Activated CD4-positive, alpha-beta T cell treated with anti-CD3 and anti-CD28 coated beads for 36 hours (primary cell): ENCODE measurements at regions of chr11 and their contacts with region 1.

Region 1: DNA sequence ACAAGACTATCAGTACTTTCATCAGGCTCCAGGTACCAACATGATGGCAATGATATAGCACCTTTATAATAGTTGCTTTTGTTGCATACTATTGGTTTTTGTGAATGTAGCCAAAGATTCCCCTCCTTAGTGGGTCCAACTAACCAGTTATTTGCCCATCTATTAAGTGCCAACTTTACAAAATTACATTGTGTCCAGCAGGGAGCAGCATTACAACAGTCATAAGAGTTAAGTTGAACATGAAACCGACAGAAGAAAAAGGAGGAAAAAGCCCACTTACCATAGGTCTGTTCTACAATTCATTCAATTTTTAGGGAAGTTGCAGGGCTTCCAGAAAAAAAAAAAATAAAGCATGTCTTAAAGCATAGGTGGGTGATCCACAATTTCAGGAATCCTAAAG is 21.6 kb downstream of the IMMP1L start:
- DNase-seq: no peak
- ATAC-seq: no peak
- H3K4me3 Mint-ChIP-seq: no peak overlapping the region
- H3K27ac Mint-ChIP-seq: no peak overlapping the region
- H3K4me1 Mint-ChIP-seq: peaks cover 18% of the 10 kb centered on the region
- H3K27me3 Mint-ChIP-seq: no peaks in the 10 kb centered on the region

Region 2: GRCh38 chr11:30984442-30984816 is 503.4 kb before region 1 on chr11:
- CTCF ChIA-PET with region 1: no interaction called
- POLR2A ChIA-PET with region 1: no interaction called
- intact Hi-C with region 1: no loop called
- DNase-seq: no peak
- ATAC-seq: no peak
- H3K4me3 Mint-ChIP-seq: no peak overlapping the region
- H3K27ac Mint-ChIP-seq: no peak overlapping the region
- H3K4me1 Mint-ChIP-seq: no peaks in the 10 kb centered on the region
- H3K27me3 Mint-ChIP-seq: no peaks in the 10 kb centered on the region

Region 3: DNA sequence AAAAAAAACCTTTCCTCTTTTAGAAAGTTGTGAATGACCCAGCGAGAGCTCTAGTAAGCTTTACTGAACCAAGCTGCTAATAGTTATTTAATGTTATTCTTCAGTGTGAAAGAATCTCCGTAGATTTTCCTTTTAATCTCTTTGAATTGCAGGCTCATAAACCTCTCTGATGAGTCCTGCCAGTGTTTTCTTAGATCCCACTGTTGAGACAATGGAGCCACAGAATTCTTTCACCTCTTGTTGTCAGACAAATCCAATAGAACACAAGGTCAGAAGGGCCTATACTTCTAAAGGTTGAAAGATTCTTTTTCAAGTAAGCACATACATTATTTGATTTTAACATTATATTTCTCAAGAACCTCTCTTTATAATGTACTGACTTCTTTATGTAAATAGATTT is 66.0 kb before region 1 on chr11:
- CTCF ChIA-PET with region 1: no interaction called
- POLR2A ChIA-PET with region 1: no interaction called
- intact Hi-C with region 1: no loop called
- DNase-seq: no peak
- ATAC-seq: no peak
- H3K4me3 Mint-ChIP-seq: no peak overlapping the region
- H3K27ac Mint-ChIP-seq: no peak overlapping the region
- H3K4me1 Mint-ChIP-seq: no peaks in the 10 kb centered on the region
- H3K27me3 Mint-ChIP-seq: no peaks in the 10 kb centered on the region

Region 4: DNA sequence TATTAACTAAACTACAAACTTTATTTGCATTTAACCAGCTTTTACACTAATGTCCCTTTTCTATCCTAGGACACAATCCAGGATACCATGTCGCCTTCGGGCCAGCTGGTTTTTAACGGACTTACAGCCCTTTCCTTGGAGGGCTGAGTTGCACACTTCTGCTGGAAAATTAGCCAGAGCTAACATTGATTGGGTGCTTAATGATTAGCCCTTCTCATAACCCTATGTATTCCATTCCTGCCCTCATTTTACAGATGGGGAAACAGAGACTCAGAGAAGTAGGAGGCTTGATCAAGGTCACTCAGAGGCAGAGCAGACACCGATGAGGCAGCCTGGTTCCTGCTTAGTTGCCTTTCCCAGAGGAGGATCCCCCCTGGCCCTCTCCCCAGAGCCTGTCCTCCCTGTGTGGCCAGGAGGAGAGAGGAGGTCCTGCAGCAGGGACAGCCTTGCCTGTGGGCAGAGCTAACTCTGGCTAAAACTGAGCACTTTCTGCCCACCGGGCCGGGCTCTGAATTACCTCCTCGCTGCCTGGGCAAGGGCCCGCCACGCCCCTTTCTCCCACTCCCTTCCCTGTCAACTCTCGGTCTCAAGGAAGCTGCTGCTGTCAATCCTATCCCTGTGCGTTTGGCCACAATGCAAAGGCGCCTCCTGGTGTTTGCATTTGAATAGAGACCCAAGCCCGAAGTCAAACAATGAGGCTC is 382.9 kb after region 1 on chr11:
- CTCF ChIA-PET with region 1: interaction called, 4 read pairs
- POLR2A ChIA-PET with region 1: no interaction called
- intact Hi-C with region 1: loop called in 1 of 2 experiments (anchors 5 kb)
- DNase-seq: peak; percentile 48
- ATAC-seq: no peak
- H3K4me3 Mint-ChIP-seq: no peak overlapping the region
- H3K27ac Mint-ChIP-seq: no peak overlapping the region
- H3K4me1 Mint-ChIP-seq: no peaks in the 10 kb centered on the region
- H3K27me3 Mint-ChIP-seq: peaks cover 18% of the 10 kb centered on the region

Region 5: DNA sequence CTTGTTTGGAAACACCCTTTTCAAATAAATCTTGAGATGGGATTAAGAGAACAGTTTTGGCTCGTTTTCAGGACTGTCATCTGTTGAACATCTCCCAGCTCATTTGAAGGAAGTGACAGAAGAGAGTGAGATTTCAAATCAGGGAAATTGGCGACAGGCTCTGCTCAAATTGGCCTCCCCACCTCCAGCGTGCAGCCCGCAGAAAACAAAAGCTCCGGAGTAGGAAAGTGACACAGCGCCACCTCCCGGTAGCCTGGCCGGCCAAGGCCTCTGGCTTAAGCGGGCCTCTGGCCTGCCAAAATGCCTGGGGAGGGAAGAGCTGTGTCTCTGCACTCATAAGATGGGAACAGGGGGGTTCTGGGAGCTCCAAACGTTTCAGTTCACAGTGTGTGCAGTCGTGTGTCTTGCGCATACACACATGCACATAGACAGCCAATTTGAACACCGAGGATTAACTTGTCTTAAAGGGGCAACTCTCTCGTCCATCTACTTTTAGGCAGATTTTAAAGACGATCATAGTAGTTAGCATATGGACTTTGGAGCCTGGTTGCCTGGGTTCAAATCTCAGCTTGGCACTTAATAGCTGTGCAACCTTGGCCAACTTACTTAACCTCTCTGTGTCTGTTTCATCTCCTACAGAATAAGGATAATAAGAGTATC is 470.4 kb after region 1 on chr11:
- CTCF ChIA-PET with region 1: interaction called, 3 read pairs
- POLR2A ChIA-PET with region 1: no interaction called
- intact Hi-C with region 1: loop called in 1 of 2 experiments (anchors 5 kb)
- DNase-seq: peak; percentile 83
- ATAC-seq: peak; percentile 53
- H3K4me3 Mint-ChIP-seq: no peak overlapping the region
- H3K27ac Mint-ChIP-seq: no peak overlapping the region
- H3K4me1 Mint-ChIP-seq: no peaks in the 10 kb centered on the region
- H3K27me3 Mint-ChIP-seq: no peaks in the 10 kb centered on the region